ENCODE measurements at regions of chr14 and their contacts with region 1.

Region 1: GRCh38 chr14:49786315-49787110 is 18.6 kb downstream of the KLHDC2 start:
- DNase-seq: no peak
- ATAC-seq: no peak
- H3K4me3 ChIP-seq: no peak overlapping the region
- H3K27ac ChIP-seq: no peak overlapping the region
- H3K4me1 ChIP-seq: no peaks in the 10 kb centered on the region
- H3K27me3 ChIP-seq: no peaks in the 10 kb centered on the region
- CTCF ChIP-seq: no peak
- POLR2A ChIP-seq: no peak

Region 2: DNA sequence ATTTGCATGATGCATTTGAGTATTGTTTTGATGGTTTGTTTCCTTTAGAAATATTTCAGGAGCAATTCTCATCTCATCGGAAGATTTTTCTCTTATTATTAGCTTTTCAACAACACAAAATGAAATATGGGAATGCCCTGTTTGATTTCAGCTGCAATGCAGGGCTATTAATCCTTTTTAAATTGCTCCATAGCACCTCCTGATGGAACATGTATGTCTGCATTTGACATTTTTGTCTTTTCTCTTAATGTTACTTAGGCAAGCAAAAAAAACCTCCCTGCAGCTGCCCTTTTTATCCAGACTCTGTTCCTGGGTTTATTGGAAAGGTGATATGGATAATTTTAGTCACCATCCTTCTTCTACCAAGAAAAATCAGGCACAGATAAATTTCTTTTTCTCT is 1096.2 kb before region 1 on chr14:
- intact Hi-C with region 1: no loop called
- DNase-seq: no peak
- ATAC-seq: no peak
- H3K4me3 ChIP-seq: no peak overlapping the region
- H3K27ac ChIP-seq: no peak overlapping the region
- H3K4me1 ChIP-seq: no peaks in the 10 kb centered on the region
- H3K27me3 ChIP-seq: no peaks in the 10 kb centered on the region
- CTCF ChIP-seq: no peak
- POLR2A ChIP-seq: no peak

Region 3: GRCh38 chr14:49677643-49678042 is 108.9 kb before region 1 on chr14:
- intact Hi-C with region 1: no loop called
- DNase-seq: no peak
- ATAC-seq: no peak
- H3K4me3 ChIP-seq: no peak overlapping the region
- H3K27ac ChIP-seq: no peak overlapping the region
- H3K4me1 ChIP-seq: no peaks in the 10 kb centered on the region
- H3K27me3 ChIP-seq: no peaks in the 10 kb centered on the region
- CTCF ChIP-seq: no peak
- POLR2A ChIP-seq: no peak

Region 4: GRCh38 chr14:49828640-49829039 is 42.1 kb after region 1 on chr14:
- intact Hi-C with region 1: loop called in 1 of 2 experiments (anchors 10 kb)
- DNase-seq: no peak
- ATAC-seq: no peak
- H3K4me3 ChIP-seq: no peak overlapping the region
- H3K27ac ChIP-seq: no peak overlapping the region
- H3K4me1 ChIP-seq: no peaks in the 10 kb centered on the region
- H3K27me3 ChIP-seq: no peaks in the 10 kb centered on the region
- CTCF ChIP-seq: no peak
- POLR2A ChIP-seq: no peak

Measured in right lobe of liver (tissue), 6 donors.